ENCODE measurements at regions of chr11 and their contacts with region 1.

Region 1: DNA sequence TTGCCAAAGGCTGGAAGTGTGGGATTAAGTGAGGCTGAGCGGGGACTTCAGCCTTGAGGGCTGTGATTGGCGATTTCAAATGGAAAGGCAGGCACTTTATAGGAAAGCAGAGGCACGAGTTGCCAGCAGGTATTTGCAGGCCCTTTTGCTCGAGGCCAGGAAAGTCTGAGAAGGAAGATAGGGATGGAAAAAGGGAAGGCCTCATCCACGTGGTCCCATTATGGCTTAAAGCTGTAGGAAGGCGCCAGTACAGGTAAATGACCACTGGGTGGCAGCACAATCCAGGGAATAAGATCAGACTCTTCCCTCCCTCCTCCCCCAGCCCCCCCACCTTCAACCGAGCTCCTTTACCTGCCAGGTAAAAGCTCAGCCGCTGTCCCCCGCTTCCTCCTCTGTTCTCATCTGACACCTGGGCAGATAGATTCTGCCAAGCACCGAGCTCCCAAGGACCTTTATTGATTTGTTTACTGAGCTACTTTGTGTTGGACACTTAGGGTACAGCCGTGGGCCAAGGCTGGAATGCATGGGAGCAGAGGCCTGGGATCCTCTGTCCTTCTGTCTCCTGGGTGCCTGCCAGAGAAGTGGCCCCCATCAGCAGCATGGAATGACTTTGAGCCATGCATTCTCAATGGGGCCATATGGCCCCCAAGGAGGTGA is 7.5 kb downstream of the P2RX3 start:
- DNase-seq: peak; percentile 69 to 81
- ATAC-seq: peak; percentile 74
- H3K4me3 ChIP-seq: no peak overlapping the region
- H3K27ac ChIP-seq: no peak overlapping the region
- H3K4me1 ChIP-seq: no peaks in the 10 kb centered on the region
- H3K27me3 ChIP-seq: no peaks in the 10 kb centered on the region

Region 2: GRCh38 chr11:57480409-57481137 is 134.9 kb after region 1 on chr11:
- intact Hi-C with region 1: loop called in 1 of 2 experiments (anchors 5 kb)
- DNase-seq: peak; percentile 78 to 91
- ATAC-seq: peak; percentile 68
- H3K4me3 ChIP-seq: no peak overlapping the region
- H3K27ac ChIP-seq: no peak overlapping the region
- H3K4me1 ChIP-seq: no peaks in the 10 kb centered on the region
- H3K27me3 ChIP-seq: no peaks in the 10 kb centered on the region

Measured in aorta (tissue), 5 donors.